WTC11 (cell line): ENCODE measurements at regions of chrX and their contacts with region 1.

Region 1: GRCh38 chrX:74291964-74292807 is 11.8 kb upstream of the ZCCHC13 start:
- DNase-seq: peak; percentile 77
- ATAC-seq: peak; percentile 85
- H3K4me3 Mint-ChIP-seq: peak overlapping the region; percentile 98
- H3K27ac Mint-ChIP-seq: peak overlapping the region; percentile 99
- H3K4me1 Mint-ChIP-seq: peaks cover 22% of the 10 kb centered on the region
- H3K27me3 Mint-ChIP-seq: no peaks in the 10 kb centered on the region
- CTCF ChIP-seq: no peak

Region 2: GRCh38 chrX:74242050-74242449 is 50.1 kb before region 1 on chrX:
- CTCF ChIA-PET with region 1: no interaction called
- POLR2A ChIA-PET with region 1: no interaction called
- DNase-seq: no peak
- ATAC-seq: no peak
- H3K4me3 Mint-ChIP-seq: no peak overlapping the region
- H3K27ac Mint-ChIP-seq: peak overlapping the region; percentile 60
- H3K4me1 Mint-ChIP-seq: peaks cover 16% of the 10 kb centered on the region
- H3K27me3 Mint-ChIP-seq: no peaks in the 10 kb centered on the region
- CTCF ChIP-seq: no peak

Region 3: GRCh38 chrX:74325130-74326059 is 33.2 kb after region 1 on chrX:
- CTCF ChIA-PET with region 1: interaction called, 30 read pairs
- POLR2A ChIA-PET with region 1: interaction called, 6 read pairs
- DNase-seq: peak; percentile 44
- ATAC-seq: peak; percentile 84
- H3K4me3 Mint-ChIP-seq: no peak overlapping the region; the same call in 1 of the 2 replicates
- H3K27ac Mint-ChIP-seq: peak overlapping the region; percentile 87
- H3K4me1 Mint-ChIP-seq: peaks cover 50% of the 10 kb centered on the region
- H3K27me3 Mint-ChIP-seq: peaks cover 18% of the 10 kb centered on the region
- CTCF ChIP-seq: no peak